ENCODE measurements at regions of chr14 and their contacts with region 1.

Region 1: DNA sequence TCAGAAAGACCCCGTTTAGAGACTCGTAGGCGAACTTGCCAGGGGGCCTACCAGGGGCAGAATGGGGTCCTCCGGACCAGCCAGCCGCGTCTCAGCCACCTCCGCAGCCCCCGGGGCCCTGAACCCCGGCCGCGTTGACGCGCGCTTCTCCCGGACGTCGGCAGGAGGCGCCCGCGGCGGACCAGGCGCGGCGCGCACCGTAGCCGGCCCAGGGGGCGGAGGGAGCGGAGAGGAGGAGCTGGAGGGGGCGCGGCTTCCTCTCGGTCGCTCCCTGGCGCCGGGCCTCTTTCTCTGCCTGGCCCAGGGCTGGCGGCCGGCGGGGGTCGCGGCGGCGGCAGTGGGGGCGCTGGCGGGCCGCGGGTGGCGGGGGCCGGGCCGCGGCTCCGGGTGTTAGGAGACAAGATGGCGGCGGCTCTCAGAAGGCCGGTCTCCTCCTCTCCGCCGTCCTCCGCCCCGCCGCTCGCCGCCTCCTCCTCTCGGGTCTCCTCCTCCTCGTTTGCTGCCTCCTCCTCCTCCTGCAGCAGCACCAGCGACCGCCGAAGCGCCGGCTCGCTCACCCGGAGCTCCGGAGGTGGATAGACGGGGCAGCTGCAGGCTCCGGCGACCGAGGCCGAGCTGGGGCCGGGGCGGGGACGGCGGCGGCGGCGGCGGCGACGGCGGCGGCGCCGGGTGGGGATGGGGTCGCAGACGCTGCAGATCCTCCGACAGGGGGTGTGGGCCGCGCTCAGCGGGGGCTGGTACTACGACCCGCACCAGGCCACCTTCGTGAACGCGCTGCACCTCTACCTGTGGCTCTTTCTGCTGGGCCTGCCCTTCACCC is at the start of gene PCNX1:
- DNase-seq: peak; percentile 79
- H3K4me3 ChIP-seq: peak within 1 kb of the TSS; percentile 90 to 93 (median 90)
- H3K27ac ChIP-seq: peak within 1 kb of the TSS; percentile 23
- H3K4me1 ChIP-seq: peaks cover 28% of the 10 kb centered on the region
- H3K27me3 ChIP-seq: no peaks in the 10 kb centered on the region
- CTCF ChIP-seq: peak; percentile 77 to 80
- POLR2A ChIP-seq: peak; percentile 49
- total RNA-seq, gene PCNX1: 30.6 and 40.5 TPM in 2 replicates

Region 2: GRCh38 chr14:70816525-70816924 is 90.9 kb before region 1 on chr14:
- CTCF ChIA-PET with region 1: interaction called, 21 read pairs
- POLR2A ChIA-PET with region 1: no interaction called
- dilution Hi-C with region 1: no loop called
- intact Hi-C with region 1: no loop called
- DNase-seq: no peak
- H3K4me3 ChIP-seq: no peak overlapping the region
- H3K27ac ChIP-seq: no peak overlapping the region
- H3K4me1 ChIP-seq: no peaks in the 10 kb centered on the region
- H3K27me3 ChIP-seq: peaks cover 28 to 33% of the 10 kb centered on the region in 2 experiments
- CTCF ChIP-seq: no peak
- POLR2A ChIP-seq: no peak

Region 3: DNA sequence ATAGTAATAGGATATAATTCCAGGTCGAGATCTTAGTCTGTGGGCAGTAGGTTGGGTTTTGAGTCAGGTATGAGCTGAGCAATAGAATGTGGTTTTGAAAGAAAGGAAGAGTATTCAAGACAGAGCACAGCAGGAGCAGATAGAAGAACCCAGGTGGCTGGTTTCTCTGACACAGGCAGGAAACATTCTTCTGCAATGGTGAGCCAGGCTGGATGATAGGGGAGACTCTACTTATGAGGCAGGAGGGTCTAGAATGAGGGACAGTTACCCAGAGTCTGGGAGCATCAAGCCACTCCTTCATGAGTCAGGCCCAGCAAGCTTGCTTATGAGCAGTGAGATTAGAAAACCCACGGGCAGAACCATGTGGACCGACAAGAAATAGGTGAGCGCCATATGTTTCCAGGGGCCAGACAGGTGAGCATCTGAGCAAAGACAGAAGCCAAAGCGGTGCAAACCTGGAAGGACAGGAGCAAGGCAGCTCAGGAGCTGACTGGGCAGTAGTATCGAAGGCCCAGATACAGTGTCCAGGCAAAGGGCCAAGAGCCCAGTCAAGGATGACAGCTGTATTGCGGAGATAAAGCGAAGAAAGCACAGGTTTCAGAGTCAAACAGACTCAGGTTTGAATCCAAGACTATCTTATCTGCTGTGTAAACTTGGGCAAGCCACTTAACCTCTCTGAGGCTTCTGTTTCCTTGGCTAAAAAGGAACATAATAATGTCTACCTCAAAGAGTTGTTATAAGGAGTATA is 22.6 kb before region 1 on chr14:
- CTCF ChIA-PET with region 1: interaction called, 11 read pairs
- POLR2A ChIA-PET with region 1: no interaction called
- dilution Hi-C with region 1: no loop called
- intact Hi-C with region 1: no loop called
- DNase-seq: no peak
- H3K4me3 ChIP-seq: no peak overlapping the region
- H3K27ac ChIP-seq: no peak overlapping the region
- H3K4me1 ChIP-seq: peaks cover 10% of the 10 kb centered on the region
- H3K27me3 ChIP-seq: peaks cover 69 to 85% of the 10 kb centered on the region in 2 experiments
- CTCF ChIP-seq: no peak
- POLR2A ChIP-seq: no peak

Region 4: DNA sequence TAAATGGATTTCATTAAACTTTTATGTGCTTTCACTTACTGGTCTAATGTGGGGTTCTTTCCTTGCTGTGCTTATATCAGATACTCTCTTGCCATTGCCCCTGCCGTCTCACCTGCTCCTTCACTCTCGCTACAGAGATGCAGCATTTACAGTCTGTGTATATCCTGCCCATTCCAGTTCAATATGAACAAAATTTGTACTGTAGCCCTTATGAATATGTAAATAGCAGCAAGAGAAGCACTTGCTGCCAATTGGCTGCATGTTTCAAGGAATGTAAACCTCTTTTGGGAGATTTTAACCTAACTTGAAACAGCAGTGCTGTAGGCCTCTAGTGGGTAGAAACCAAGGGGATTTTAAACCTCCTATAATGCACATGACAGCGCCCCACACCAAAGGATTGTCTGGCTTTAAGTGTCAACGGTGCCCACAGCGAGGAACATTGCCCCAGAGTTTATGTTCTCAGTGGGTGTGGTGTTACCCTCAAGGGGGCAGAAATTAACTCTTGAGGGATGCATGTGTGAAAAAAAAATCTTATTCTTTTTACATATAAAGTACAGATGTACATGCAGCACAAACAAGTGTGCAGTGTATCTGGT is 18.9 kb after region 1 on chr14:
- CTCF ChIA-PET with region 1: interaction called, 71 read pairs
- POLR2A ChIA-PET with region 1: no interaction called
- dilution Hi-C with region 1: no loop called
- intact Hi-C with region 1: no loop called
- DNase-seq: no peak
- H3K4me3 ChIP-seq: no peak overlapping the region
- H3K27ac ChIP-seq: no peak overlapping the region
- H3K4me1 ChIP-seq: no peaks in the 10 kb centered on the region
- H3K27me3 ChIP-seq: no peaks in the 10 kb centered on the region
- CTCF ChIP-seq: no peak
- POLR2A ChIP-seq: no peak

Region 5: DNA sequence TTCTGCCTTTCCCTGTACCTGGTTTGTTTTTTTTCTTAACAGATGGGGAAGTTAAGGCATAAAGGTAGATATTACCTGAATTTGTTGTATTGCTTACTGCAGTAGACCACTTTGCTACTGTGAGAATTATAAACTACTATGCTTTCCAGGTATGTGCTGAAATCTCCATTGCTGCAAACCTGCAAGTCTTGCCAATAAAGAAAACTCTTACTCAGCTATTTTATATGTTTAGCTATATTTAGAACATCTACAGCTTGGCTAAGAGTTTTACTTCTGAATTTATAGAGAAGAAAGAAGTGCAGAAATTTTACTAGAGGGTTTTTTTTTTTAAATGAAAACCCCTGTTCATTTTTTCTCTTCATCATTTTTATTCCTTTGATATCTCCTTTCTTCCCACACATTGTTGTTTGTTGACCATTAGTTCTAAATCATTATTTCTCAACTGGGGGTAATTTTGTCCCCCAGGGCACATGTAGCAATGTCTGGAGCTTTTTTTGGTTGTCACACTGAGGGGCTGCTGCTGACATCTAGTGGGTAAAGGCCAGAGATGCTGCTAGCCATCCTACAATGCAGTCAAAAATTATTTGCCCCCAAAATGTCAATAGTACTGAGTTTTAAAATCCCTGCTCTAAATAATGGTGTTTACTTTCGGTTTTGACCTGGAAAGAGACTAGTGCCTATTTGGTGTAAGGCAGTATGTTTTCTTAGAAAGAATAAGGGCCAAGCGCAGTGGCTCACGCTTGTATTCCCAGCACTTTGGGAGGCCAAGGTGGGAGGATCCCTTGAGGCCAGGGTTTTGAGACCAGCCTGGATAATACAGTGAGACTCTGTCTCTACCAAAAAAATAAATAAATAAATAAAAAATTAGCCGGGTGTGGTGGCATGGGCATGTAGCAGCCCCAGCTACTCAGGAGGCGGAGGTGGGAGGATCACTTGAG is 48.4 kb after region 1 on chr14:
- CTCF ChIA-PET with region 1: interaction called, 99 read pairs
- POLR2A ChIA-PET with region 1: interaction called, 3 read pairs
- dilution Hi-C with region 1: no loop called
- intact Hi-C with region 1: loop called (anchors 1 kb)
- DNase-seq: peak; percentile 41
- H3K4me3 ChIP-seq: no peak overlapping the region
- H3K27ac ChIP-seq: no peak overlapping the region
- H3K4me1 ChIP-seq: no peaks in the 10 kb centered on the region
- H3K27me3 ChIP-seq: no peaks in the 10 kb centered on the region
- CTCF ChIP-seq: peak; percentile 49 to 64
- POLR2A ChIP-seq: no peak

Measured in endothelial cell of umbilical vein (primary cell).